Activated T-helper 2 cell treated with anti-CD3 and anti-CD28 coated beads, Interferon-gamma antibody, Interleukin-2, Interleukin-4, amounts not matched to agents 10 μg/mL and 5 μg/mL and 100 μg/mL, durations not matched to agents 14 hours and 24 hours and 36 hours (primary cell): ENCODE measurements at regions of chr6 and their contacts with region 1.

Region 1: GRCh38 chr6:97059473-97059872 is 134.9 kb downstream of the KLHL32 start:
- DNase-seq: no peak
- H3K4me3 Mint-ChIP-seq: no peak overlapping the region
- H3K27ac Mint-ChIP-seq: no peak overlapping the region
- H3K4me1 Mint-ChIP-seq: peaks cover 4% of the 10 kb centered on the region
- H3K27me3 Mint-ChIP-seq: peaks cover 6% of the 10 kb centered on the region

Region 2: GRCh38 chr6:95431637-95432228 is 1627.7 kb before region 1 on chr6:
- intact Hi-C with region 1: loop called (anchors 5 kb)
- DNase-seq: no peak
- H3K4me3 Mint-ChIP-seq: no peak overlapping the region
- H3K27ac Mint-ChIP-seq: no peak overlapping the region
- H3K4me1 Mint-ChIP-seq: no peaks in the 10 kb centered on the region
- H3K27me3 Mint-ChIP-seq: no peaks in the 10 kb centered on the region

Region 3: GRCh38 chr6:96542702-96543101 is 516.8 kb before region 1 on chr6:
- intact Hi-C with region 1: loop called (anchors 5 kb)
- DNase-seq: no peak
- H3K4me3 Mint-ChIP-seq: no peak overlapping the region
- H3K27ac Mint-ChIP-seq: no peak overlapping the region
- H3K4me1 Mint-ChIP-seq: peaks cover 1% of the 10 kb centered on the region
- H3K27me3 Mint-ChIP-seq: no peaks in the 10 kb centered on the region

Region 4: DNA sequence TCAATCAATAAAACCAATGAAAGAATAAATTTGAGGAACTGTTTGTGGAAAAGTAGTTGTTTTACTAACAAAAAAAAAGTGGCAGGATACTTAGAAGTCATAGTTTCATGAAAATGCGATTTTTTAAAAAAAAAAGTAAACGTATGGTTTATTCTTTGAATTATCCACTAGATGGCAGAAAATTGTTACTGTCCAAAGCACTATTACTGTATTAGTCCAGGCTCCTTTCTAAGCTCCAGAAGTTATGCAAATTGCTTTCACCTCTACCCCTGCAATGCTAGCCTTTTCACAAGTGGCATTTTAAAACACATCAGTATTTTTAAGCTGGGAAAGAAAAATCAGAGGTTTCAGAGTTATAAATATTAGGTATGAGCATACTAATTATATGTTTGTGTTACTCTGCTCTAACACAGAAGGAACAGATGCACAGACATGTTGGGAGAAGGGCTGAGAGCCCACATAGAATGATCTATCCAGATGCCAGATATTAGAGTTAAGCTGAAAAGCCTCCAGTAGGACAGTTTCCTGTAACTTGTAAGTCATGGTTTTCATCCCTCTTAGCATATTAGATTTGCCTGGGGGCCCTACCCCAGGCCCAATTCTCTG is 432.6 kb before region 1 on chr6:
- intact Hi-C with region 1: loop called (anchors 1 kb)
- DNase-seq: no peak
- H3K4me3 Mint-ChIP-seq: no peak overlapping the region
- H3K27ac Mint-ChIP-seq: no peak overlapping the region
- H3K4me1 Mint-ChIP-seq: peaks cover 7% of the 10 kb centered on the region
- H3K27me3 Mint-ChIP-seq: peaks cover 17% of the 10 kb centered on the region

Region 5: GRCh38 chr6:96837081-96837971 is 222.1 kb before region 1 on chr6 and contains the start of gene GPR63:
- intact Hi-C with region 1: loop called (anchors 5 kb)
- DNase-seq: peak; percentile 84
- H3K4me3 Mint-ChIP-seq: peak within 1 kb of the TSS; percentile 90
- H3K27ac Mint-ChIP-seq: peak within 1 kb of the TSS; percentile 43
- H3K4me1 Mint-ChIP-seq: peaks cover 34% of the 10 kb centered on the region
- H3K27me3 Mint-ChIP-seq: peaks cover 24% of the 10 kb centered on the region
- total RNA-seq, gene GPR63: 4.5 and 5.0 TPM in 2 replicates

Region 6: DNA sequence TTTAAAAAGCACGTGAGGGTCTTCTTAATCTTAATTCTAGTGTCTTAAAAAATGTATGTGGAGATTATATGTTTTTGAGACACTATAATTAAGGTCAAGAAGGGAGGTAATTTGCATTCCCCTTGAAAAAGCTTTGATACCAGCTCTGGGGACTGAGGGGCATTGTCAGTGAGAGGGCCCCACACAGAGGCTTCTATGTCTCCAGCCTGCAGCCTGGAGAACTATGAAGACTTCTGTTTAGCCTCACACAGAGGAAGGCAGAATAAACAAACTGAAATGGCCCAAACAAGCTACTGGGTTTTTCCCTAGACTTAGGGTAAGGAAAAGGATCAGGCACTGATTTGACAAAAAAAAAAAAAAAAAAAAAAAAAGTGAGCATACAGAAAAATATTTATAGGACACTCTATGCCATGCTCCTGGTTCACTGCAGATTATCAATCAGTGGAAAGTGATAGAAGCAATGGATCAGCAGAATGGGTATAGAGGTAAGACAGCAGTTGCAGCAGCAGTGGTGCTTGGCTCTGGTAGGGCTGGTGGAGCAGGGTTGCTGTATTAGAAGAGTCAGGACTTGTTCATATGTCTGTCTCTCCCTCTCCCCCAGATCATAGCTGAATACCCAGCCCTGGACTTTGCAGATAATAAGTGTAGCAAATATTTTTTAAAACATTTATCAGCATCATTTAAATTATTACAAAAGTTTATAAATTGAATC is 49.5 kb before region 1 on chr6:
- intact Hi-C with region 1: no loop called
- DNase-seq: no peak
- H3K4me3 Mint-ChIP-seq: no peak overlapping the region
- H3K27ac Mint-ChIP-seq: no peak overlapping the region
- H3K4me1 Mint-ChIP-seq: no peaks in the 10 kb centered on the region
- H3K27me3 Mint-ChIP-seq: peaks cover 7% of the 10 kb centered on the region